ENCODE measurements at regions of chr14 and their contacts with region 1.

Region 1: GRCh38 chr14:76918751-76919543 is 92.7 kb downstream of the LRRC74A start:
- DNase-seq: peak; percentile 97
- H3K27ac ChIP-seq: peak overlapping the region; percentile 100
- CTCF ChIP-seq: no peak

Region 2: GRCh38 chr14:77059276-77059915 is 140.4 kb after region 1 on chr14:
- CTCF ChIA-PET with region 1: interaction called, 24 read pairs
- POLR2A ChIA-PET with region 1: no interaction called
- DNase-seq: peak; percentile 74
- H3K27ac ChIP-seq: peak overlapping the region; percentile 52
- CTCF ChIP-seq: no peak